B cell (primary cell): ENCODE measurements at regions of chr14 and their contacts with region 1.

Region 1: GRCh38 chr14:103910262-103910935 is 17.9 kb upstream of the TDRD9 start:
- DNase-seq: peak; percentile 72
- ATAC-seq: peak; percentile 73
- H3K4me3 ChIP-seq: peak overlapping the region in 1 of 5 experiments; percentile 15
- H3K4me3 Mint-ChIP-seq: peak overlapping the region; percentile 51
- H3K27ac ChIP-seq: no peak overlapping the region
- H3K27ac Mint-ChIP-seq: no peak overlapping the region
- H3K4me1 ChIP-seq: peaks cover 4 to 10% of the 10 kb centered on the region in 2 donors
- H3K4me1 Mint-ChIP-seq: peaks cover 8% of the 10 kb centered on the region
- H3K27me3 ChIP-seq: no peaks in the 10 kb centered on the region
- H3K27me3 Mint-ChIP-seq: no peaks in the 10 kb centered on the region
- CTCF ChIP-seq: peak; percentile 78

Region 2: DNA sequence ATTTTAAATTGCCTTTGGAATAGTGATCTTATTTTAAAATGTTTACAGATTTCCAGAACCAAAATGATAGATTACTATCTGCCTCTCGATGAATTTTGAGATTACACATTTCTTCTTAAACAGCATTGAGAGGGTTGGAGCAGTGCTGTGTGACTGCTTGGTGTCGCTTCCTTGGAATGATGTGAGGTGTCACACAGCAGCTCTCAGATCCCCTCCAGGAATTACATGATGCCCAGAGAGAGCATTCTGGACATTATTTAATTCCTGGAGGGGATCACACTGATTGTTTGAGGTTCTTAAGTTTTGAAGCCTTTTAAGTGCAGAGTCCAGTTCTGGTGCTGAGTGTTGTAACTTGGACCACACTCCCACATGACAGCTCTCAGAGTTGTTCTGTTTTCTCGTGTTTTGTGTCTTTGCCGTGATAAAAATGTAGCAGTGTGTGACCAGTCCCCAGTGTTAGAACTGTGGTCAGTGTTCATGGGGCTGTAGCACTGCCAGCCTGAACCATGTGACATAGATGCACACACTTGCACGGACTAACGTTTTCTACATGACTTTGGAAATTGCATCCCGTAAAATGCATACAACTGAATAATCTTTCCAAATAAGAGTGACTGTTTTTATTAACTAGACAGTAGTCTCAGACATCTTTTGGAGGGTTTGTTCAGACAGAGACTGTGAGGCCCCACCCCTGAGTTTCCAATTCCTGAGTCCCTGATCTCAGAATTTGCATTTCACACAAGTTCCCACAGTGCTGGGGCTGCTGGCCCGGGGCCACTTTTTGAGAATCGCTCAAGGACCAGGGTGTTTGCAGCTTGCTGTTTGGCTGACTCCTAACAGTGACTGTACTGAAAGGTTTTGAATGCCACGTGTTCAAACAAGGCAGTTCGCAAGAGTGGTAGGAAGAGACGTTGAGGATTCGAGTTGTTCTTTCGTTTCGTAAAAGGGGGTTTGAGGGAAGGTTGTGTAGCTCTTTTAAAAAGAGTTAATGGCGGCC is 221.2 kb before region 1 on chr14:
- CTCF ChIA-PET with region 1: no interaction called
- POLR2A ChIA-PET with region 1: no interaction called
- intact Hi-C with region 1: no loop called
- DNase-seq: peak; percentile 40
- ATAC-seq: peak; percentile 57
- H3K4me3 ChIP-seq: peak overlapping the region in 2 of 5 experiments; percentile 6 to 26
- H3K4me3 Mint-ChIP-seq: peak overlapping the region; percentile 82
- H3K27ac ChIP-seq: peak overlapping the region in 1 of 2 donors; percentile 62
- H3K27ac Mint-ChIP-seq: peak overlapping the region; percentile 88
- H3K4me1 ChIP-seq: peaks cover 41 to 43% of the 10 kb centered on the region in 2 donors
- H3K4me1 Mint-ChIP-seq: peaks cover 38% of the 10 kb centered on the region
- H3K27me3 ChIP-seq: no peaks in the 10 kb centered on the region
- H3K27me3 Mint-ChIP-seq: no peaks in the 10 kb centered on the region
- CTCF ChIP-seq: no peak

Region 3: GRCh38 chr14:103899316-103899715 is 11.1 kb before region 1 on chr14:
- CTCF ChIA-PET with region 1: interaction called, 13 read pairs
- POLR2A ChIA-PET with region 1: no interaction called
- intact Hi-C with region 1: no loop called
- DNase-seq: no peak
- ATAC-seq: no peak
- H3K4me3 ChIP-seq: no peak overlapping the region
- H3K4me3 Mint-ChIP-seq: no peak overlapping the region
- H3K27ac ChIP-seq: no peak overlapping the region
- H3K27ac Mint-ChIP-seq: no peak overlapping the region
- H3K4me1 ChIP-seq: peaks cover 0 to 3% of the 10 kb centered on the region in 2 donors
- H3K4me1 Mint-ChIP-seq: peaks cover 3% of the 10 kb centered on the region
- H3K27me3 ChIP-seq: no peaks in the 10 kb centered on the region
- H3K27me3 Mint-ChIP-seq: peaks cover 11% of the 10 kb centered on the region
- CTCF ChIP-seq: no peak

Region 4: GRCh38 chr14:104037903-104038302 is 127.5 kb after region 1 on chr14:
- CTCF ChIA-PET with region 1: no interaction called
- POLR2A ChIA-PET with region 1: no interaction called
- intact Hi-C with region 1: no loop called
- DNase-seq: no peak
- ATAC-seq: no peak
- H3K4me3 ChIP-seq: no peak overlapping the region
- H3K4me3 Mint-ChIP-seq: no peak overlapping the region
- H3K27ac ChIP-seq: no peak overlapping the region
- H3K27ac Mint-ChIP-seq: no peak overlapping the region
- H3K4me1 ChIP-seq: no peaks in the 10 kb centered on the region
- H3K4me1 Mint-ChIP-seq: no peaks in the 10 kb centered on the region
- H3K27me3 ChIP-seq: peaks cover 0 to 9% (median 0%) of the 10 kb centered on the region in 4 experiments
- H3K27me3 Mint-ChIP-seq: peaks cover 39% of the 10 kb centered on the region
- CTCF ChIP-seq: no peak